AG04449 (cell line): ENCODE measurements at regions of chr14 and their contacts with region 1.

Region 1: GRCh38 chr14:59126710-59127432 is 61.6 kb upstream of the DAAM1 start:
- DNase-seq: no peak
- H3K4me3 ChIP-seq: no peak overlapping the region
- CTCF ChIP-seq: peak; percentile 62

Region 2: DNA sequence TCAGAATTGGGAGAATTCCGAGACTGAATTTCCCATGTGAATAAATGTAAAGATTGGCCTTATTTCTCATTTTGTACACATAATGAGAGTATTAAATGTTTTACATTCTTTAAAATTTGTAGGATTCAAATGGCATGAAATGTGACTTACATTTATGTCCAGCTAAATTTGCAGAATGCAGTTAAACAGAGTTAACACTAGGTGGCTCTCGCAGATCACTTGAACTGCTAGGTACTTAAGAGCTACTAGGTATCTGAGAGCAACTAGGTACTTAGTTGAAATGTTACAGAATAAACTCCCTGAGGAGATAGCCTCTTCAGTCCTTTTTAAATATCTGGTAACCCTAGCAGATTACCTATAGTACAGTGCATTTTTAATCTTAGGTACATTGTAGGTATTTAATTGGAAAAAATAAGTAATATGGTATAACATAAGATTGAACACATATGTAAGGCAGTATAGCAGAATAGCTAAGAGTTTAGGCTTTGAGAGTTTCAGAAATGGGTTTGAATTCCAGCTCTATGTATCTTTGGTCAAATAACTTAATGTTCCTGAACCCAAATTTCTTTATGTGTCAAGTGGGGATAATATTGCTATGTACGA is 625.6 kb before region 1 on chr14:
- CTCF ChIA-PET with region 1: interaction called, 52 read pairs
- POLR2A ChIA-PET with region 1: no interaction called
- DNase-seq: peak; percentile 74
- H3K4me3 ChIP-seq: no peak overlapping the region
- CTCF ChIP-seq: peak; percentile 73

Region 3: GRCh38 chr14:59028476-59029202 is 98.2 kb before region 1 on chr14:
- CTCF ChIA-PET with region 1: interaction called, 74 read pairs
- POLR2A ChIA-PET with region 1: no interaction called
- DNase-seq: peak; percentile 87
- H3K4me3 ChIP-seq: no peak overlapping the region
- CTCF ChIP-seq: peak; percentile 91

Region 4: GRCh38 chr14:59107819-59108428 is 18.9 kb before region 1 on chr14:
- CTCF ChIA-PET with region 1: interaction called, 15 read pairs
- POLR2A ChIA-PET with region 1: no interaction called
- DNase-seq: no peak
- H3K4me3 ChIP-seq: no peak overlapping the region
- CTCF ChIP-seq: no peak

Region 5: DNA sequence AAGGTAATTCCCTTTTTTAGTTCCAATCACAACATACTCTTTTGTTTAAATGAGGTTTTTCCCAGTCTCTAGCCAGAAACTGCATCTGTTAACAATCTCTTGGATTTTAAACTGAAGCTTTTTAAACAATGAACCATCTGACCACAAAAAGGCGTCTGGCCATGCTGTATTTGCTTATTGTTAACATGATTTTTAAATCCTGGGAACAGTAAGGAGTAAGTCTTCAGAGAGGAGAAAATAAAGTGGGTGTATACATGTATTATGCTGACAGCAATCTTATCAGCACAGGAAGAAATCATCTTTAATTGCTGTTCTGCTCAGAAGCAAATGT is 167.8 kb after region 1 on chr14:
- CTCF ChIA-PET with region 1: no interaction called
- POLR2A ChIA-PET with region 1: no interaction called
- DNase-seq: no peak
- H3K4me3 ChIP-seq: no peak overlapping the region
- CTCF ChIP-seq: no peak

Region 6: DNA sequence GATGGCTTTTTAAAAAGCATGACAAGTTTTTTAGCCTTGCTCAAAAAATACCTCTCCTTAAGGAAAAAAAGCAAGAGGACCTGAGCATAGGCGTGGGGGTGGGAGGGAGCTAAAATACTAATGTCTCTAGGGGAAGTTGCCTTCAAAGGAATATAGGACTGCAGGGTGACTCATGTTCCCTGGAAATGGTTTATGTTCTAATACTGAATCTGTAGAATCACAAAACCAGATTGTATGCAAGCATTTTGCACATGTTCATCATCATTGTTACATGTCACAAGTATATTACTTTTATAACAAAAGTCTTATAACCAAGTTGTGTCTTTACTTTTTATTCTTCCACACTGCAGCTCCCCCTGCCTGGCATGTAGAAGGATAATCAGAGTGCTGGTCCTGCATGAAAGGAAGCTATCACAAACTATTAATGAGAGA is 301.7 kb after region 1 on chr14:
- CTCF ChIA-PET with region 1: interaction called, 443 read pairs
- POLR2A ChIA-PET with region 1: no interaction called
- DNase-seq: no peak
- H3K4me3 ChIP-seq: no peak overlapping the region
- CTCF ChIP-seq: peak; percentile 27

Region 7: GRCh38 chr14:59438195-59438647 is 311.4 kb after region 1 on chr14:
- CTCF ChIA-PET with region 1: interaction called, 443 read pairs
- POLR2A ChIA-PET with region 1: no interaction called
- DNase-seq: peak; percentile 71
- H3K4me3 ChIP-seq: no peak overlapping the region
- CTCF ChIP-seq: no peak

Region 8: DNA sequence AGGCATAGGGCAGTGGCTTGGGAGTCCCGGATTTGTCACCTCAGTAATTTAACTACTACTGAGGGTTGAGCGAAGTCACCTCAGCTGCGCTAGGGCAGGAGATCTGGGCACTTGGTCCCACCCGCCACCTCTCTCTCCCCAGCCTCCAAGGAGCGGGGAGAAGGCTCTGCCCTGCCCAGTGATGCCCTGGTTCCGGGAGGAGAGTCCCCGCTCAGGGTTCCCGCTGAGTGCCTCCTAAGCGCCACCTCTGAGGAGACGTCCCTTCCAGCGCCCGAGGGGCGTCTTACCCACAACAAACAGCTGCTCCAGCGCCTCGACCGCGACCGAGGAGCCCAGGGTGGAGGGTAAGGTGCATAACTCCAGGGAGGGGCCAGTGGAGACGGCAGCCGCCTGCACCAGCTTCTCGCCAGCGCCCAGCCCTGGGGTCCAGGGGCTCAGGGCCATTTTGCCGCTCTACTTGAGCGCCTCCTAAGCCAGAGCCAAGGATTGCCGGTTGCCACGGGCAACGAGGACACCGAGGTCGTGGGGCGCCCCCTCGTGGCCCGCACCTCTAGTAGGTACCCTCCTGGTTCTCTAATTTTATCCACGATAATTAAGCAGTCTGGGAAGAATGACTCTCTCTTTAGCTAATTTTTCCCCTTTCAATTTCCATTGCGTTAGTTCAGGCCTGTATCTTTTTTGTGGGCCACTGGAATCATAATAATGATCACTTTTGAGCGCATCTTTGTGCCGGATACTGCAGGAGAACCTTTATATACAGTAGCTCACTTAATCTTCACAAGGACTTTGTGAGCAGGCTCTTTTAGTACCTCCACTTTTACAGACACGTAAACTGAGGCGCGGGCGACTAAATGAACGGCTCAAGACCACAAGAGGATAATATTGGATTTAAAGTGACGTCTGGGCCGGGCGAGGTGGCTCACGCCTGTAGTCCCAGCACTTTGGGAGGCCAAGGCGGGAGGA is 449.7 kb after region 1 on chr14 and contains the start of gene CCDC175:
- CTCF ChIA-PET with region 1: interaction called, 22 read pairs
- POLR2A ChIA-PET with region 1: no interaction called
- DNase-seq: no peak
- H3K4me3 ChIP-seq: peak within 1 kb of the TSS; percentile 44
- CTCF ChIP-seq: peak; percentile 73